ENCODE measurements at regions of chr2 and their contacts with region 1.

Region 1: DNA sequence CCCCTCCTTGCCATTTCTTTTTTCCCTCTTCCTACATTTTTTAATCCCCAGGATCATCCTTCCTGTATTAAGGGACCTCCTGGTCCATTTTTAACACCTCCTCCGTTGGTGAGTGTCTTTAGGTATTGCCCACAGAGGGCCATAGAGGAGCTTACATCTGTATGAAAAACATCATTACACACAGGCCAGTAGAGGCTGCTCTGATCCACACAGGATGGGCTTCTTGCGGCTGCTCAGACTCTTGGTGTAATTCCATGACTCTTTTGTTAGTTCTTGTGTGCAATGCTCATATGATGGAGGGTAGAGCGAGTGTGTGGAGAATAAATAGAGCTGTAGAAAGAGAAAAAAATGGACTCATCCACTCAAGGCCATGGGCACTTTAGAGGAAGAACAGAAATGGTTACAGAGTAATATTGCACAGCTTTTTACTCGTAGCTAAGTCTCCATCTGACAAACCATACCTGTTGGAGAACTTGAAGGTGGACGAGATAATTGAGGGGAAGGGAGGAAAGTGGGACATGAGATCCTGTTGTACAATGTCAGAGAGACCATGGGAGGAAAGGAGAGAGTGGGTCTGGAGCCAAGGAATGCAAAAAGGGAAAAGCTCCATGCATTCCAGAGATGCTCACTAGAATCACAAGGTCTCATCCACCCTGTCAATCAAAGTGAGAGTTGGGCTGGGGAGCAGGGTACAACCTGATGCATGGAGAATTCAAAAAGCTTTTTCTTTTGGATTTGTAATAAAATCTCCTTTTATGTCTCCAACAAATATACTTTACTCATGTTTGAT is 129.7 kb upstream of the TNP1 start:
- DNase-seq: no peak
- ATAC-seq: peak; percentile 32 to 49

Region 2: DNA sequence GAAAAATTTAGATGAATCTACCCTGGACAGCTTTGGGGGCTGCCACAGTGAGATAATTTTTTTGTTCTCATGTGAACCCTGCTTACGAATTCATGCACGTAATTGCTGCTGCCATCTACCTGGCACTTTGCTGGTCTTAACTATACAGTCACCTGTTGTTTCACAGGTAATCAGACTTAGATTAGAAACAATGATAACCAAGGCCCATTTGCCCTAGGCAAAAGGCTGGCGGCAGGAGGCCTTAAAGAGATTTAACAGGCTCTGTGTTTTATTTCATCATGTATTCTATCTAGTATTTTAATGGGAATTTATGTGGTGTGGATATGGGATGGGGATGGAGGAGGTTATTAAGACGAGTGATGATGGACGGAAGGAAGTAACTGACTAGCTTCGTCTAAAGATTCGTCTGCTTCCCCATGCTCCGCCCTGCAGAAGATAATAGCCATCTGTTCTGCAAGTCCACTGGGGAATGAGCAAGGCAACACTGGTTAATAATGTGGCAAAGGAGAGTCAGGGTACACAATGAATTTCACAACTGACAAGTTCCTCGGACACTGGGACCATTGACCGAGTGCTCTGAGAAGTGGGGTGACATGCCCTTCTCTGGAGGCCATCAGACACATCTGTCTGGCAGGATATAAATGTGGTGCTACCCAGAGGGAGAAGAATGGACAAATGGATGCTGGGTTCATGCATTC is 162.1 kb after region 1 on chr2:
- intact Hi-C with region 1: loop called in 1 of 2 experiments (anchors 10 kb)
- DNase-seq: no peak
- ATAC-seq: peak in 1 of 2 donors; percentile 25

Region 3: GRCh38 chr2:217307023-217307422 is 317.5 kb after region 1 on chr2:
- intact Hi-C with region 1: no loop called
- DNase-seq: no peak
- ATAC-seq: no peak

Region 4: DNA sequence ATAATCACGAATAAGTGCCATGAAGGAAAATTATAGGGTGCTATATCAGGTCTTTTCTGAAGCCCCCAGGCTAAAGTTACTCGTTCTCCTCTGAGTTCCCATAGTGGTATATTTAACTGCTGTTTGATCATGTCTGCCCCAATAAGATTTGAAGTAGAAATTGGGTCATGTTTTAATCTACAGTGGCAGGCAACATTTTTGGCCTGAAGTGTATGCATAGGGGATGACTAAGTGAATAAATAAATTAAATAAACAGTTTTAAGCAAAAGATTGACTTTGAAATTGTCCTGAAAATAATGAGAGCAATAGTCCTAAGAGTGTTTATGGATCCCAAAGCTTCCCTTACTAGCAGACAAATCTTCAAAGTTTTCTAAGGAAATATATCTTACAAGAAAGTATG is 512.4 kb after region 1 on chr2:
- intact Hi-C with region 1: loop called in 1 of 2 experiments (anchors 10 kb)
- DNase-seq: no peak
- ATAC-seq: no peak

Measured in left cardiac atrium (tissue), 4 donors.